ENCODE measurements at regions of chr16 and their contacts with region 1.

Region 1: DNA sequence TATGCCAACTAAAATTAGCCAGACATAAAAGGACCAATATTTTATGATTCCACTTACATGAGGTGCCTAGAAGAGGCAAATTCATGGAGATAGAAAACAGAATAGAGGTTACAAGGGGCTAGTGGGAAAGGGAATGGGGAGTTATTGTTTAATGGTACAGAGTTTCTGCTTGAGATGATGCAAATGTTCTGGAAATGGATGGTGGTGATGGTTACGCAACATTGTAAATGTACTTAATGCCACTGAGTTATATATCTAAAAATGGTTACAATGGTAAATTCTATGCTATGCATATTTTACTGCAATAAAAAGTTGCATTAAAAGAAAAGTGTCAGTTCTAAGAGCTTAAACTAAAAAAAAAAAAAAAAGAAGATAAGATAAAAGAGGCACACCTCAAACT is 17.9 kb downstream of the MT1X start:
- DNase-seq: no peak
- ATAC-seq: no peak
- H3K4me3 Mint-ChIP-seq: no peak overlapping the region
- H3K27ac Mint-ChIP-seq: no peak overlapping the region
- H3K4me1 Mint-ChIP-seq: peaks cover 11% of the 10 kb centered on the region
- H3K27me3 Mint-ChIP-seq: no peaks in the 10 kb centered on the region

Region 2: DNA sequence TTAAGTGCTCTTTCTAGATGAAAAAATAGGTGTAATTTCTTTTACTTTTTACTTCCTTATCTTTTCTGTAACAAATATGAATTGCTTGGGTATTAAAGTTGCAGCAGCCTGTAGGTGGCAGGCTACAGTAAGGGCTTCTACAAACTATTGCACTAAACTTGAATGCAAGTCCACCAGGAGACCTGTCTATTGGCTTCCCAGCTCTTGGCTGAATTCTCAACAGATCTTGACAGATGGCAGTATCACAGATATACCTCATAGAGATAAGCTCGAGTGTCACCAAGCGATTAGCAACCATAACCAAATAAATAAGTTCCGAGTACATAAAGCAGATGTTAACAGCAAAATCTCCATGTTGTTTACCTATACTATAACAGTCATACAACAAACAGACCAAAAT is 186.2 kb before region 1 on chr16:
- CTCF ChIA-PET with region 1: interaction called, 14 read pairs
- DNase-seq: peak; percentile 72
- ATAC-seq: peak; percentile 72
- H3K4me3 Mint-ChIP-seq: no peak overlapping the region
- H3K27ac Mint-ChIP-seq: no peak overlapping the region
- H3K4me1 Mint-ChIP-seq: peaks cover 6% of the 10 kb centered on the region
- H3K27me3 Mint-ChIP-seq: no peaks in the 10 kb centered on the region

Region 3: DNA sequence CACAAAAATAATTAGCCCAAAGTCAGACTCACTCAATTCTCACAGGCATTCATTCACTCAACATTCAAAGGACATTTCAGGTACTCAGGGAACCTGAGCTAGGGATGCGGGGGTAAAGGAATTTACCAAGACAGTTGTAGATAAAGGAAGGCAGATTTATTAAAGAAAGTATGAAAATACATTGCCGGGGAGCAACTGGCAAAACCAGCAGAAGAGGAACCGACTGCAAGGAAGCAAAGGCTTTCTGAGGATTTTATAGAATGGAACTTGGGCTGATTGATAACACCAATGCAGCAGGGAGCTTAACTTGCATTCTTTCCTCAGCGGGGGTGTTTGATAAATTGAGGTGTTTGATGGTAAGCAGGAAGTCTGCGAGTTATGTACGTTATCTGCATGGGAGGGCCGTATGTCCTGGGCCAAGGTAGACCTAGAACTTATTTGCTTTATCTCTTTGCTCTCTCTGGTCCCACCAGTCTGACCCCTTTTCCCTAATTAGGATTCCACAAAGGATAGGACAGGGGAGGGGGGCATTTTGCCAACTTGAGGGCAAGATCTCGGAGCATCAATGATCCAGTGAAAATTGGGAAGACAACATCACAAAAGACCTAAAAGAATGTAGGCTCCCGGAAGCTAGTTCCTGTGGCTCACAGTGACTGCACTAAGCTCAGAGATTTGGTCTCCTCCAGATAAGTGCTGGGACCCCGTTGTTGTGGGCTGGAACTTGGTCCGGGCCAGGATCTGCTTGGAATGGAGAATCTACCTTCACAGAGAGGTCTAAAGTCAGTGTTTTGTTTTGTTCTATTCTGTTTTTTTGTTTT is 116.6 kb before region 1 on chr16:
- CTCF ChIA-PET with region 1: interaction called, 17 read pairs
- DNase-seq: no peak
- ATAC-seq: no peak
- H3K4me3 Mint-ChIP-seq: no peak overlapping the region
- H3K27ac Mint-ChIP-seq: no peak overlapping the region
- H3K4me1 Mint-ChIP-seq: no peaks in the 10 kb centered on the region
- H3K27me3 Mint-ChIP-seq: peaks cover 44% of the 10 kb centered on the region

Region 4: DNA sequence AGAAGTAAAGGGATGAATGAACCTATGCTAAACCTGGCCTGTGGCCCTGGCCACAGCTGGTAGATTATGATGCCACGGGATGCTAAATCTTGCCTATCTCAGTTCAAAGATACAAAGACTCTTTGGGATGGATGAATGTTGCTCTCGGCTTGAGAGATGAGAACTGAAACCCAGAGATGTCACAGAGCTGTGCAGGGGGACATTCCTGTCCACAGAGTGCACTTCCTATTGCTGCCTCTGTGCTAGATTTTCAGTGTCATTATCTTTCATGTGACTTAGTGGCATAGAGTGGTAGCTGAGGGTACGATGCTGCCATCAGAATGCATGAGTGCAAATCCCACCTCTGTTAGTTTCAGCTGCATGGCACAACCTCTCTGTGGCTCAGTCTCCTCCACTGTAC is 70.1 kb before region 1 on chr16:
- CTCF ChIA-PET with region 1: interaction called, 10 read pairs
- DNase-seq: no peak
- ATAC-seq: no peak
- H3K4me3 Mint-ChIP-seq: no peak overlapping the region
- H3K27ac Mint-ChIP-seq: no peak overlapping the region
- H3K4me1 Mint-ChIP-seq: peaks cover 40% of the 10 kb centered on the region
- H3K27me3 Mint-ChIP-seq: peaks cover 72% of the 10 kb centered on the region

Region 5: GRCh38 chr16:56673921-56674320 is 26.3 kb before region 1 on chr16:
- CTCF ChIA-PET with region 1: interaction called, 21 read pairs
- DNase-seq: peak; percentile 48
- ATAC-seq: peak; percentile 34
- H3K4me3 Mint-ChIP-seq: no peak overlapping the region
- H3K27ac Mint-ChIP-seq: no peak overlapping the region
- H3K4me1 Mint-ChIP-seq: peaks cover 16% of the 10 kb centered on the region
- H3K27me3 Mint-ChIP-seq: peaks cover 51% of the 10 kb centered on the region

Region 6: GRCh38 chr16:56716761-56717160 is 16.6 kb after region 1 on chr16:
- CTCF ChIA-PET with region 1: interaction called, 12 read pairs
- DNase-seq: no peak
- ATAC-seq: no peak
- H3K4me3 Mint-ChIP-seq: no peak overlapping the region
- H3K27ac Mint-ChIP-seq: no peak overlapping the region
- H3K4me1 Mint-ChIP-seq: peaks cover 7% of the 10 kb centered on the region
- H3K27me3 Mint-ChIP-seq: no peaks in the 10 kb centered on the region

Region 7: DNA sequence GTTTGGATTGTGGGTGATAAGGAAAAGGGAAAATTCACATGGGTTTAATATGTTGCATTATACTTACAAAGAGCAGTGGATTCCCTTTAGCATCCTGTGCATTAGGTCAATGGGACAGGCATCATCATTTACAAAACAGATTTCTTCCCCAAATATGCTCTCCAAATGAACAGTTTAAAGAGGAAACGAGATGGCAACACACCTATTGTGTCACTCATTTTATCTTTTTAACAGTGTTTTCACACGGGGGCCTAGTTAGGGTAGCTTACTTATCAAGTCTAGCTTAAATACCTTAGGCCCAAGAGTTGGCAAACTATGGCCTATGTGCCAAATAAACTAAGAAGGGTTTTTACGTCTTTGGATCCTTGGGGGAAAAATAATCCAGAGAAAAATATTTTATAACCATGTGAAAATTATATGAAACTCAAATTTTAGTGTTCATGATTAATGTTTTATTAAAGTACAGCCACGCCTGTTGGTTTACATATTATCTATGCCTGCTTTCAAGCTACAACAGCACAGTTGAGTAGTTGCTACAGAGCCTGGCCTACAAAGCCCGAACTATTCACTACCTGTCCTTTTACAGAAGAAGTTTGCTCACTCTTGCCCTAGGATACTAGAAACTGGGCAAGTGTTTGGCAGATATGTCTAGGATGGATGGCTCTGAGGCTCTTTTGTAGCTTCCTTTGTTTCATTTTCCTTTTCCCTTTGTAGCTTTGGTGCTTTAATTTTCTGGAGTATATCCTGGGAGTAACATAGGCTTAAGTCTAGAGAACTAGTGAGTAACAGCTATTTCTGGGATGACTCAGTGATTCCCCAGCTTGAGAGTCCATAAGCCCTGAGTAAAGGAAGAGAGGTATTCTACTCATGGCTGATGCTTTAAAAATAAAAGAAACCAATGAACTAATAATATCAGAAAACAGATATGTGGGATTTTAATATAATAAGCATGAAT is 42.1 kb after region 1 on chr16:
- CTCF ChIA-PET with region 1: no interaction called
- DNase-seq: no peak
- ATAC-seq: no peak
- H3K4me3 Mint-ChIP-seq: no peak overlapping the region
- H3K27ac Mint-ChIP-seq: no peak overlapping the region
- H3K4me1 Mint-ChIP-seq: peaks cover 12% of the 10 kb centered on the region
- H3K27me3 Mint-ChIP-seq: no peaks in the 10 kb centered on the region

Region 8: GRCh38 chr16:56767024-56767423 is 66.8 kb after region 1 on chr16:
- CTCF ChIA-PET with region 1: no interaction called
- DNase-seq: no peak
- ATAC-seq: no peak
- H3K4me3 Mint-ChIP-seq: no peak overlapping the region
- H3K27ac Mint-ChIP-seq: no peak overlapping the region
- H3K4me1 Mint-ChIP-seq: peaks cover 33% of the 10 kb centered on the region
- H3K27me3 Mint-ChIP-seq: no peaks in the 10 kb centered on the region

Region 9: GRCh38 chr16:56877486-56878182 is 177.4 kb after region 1 on chr16:
- CTCF ChIA-PET with region 1: no interaction called
- DNase-seq: no peak
- ATAC-seq: no peak
- H3K4me3 Mint-ChIP-seq: no peak overlapping the region
- H3K27ac Mint-ChIP-seq: no peak overlapping the region
- H3K4me1 Mint-ChIP-seq: peaks cover 8% of the 10 kb centered on the region
- H3K27me3 Mint-ChIP-seq: no peaks in the 10 kb centered on the region

Measured in activated CD8-positive, alpha-beta memory T cell treated with anti-CD3 and anti-CD28 coated beads, Interleukin-2, amount 10 ng/mL, durations not matched to agents 7 days and 5 days (primary cell).